Transverse colon (tissue), 4 donors: ENCODE measurements at regions of chr15 and their contacts with region 1.

Region 1: GRCh38 chr15:61834076-61834697 is 226.1 kb downstream of the VPS13C start:
- DNase-seq: peak; percentile 82
- H3K4me3 ChIP-seq: no peak overlapping the region
- H3K27ac ChIP-seq: no peak overlapping the region
- H3K4me1 ChIP-seq: no peaks in the 10 kb centered on the region
- H3K27me3 ChIP-seq: no peaks in the 10 kb centered on the region
- CTCF ChIP-seq: peak; percentile 87 to 98 (median 96)
- EP300 ChIP-seq: no peak
- POLR2A ChIP-seq: no peak

Region 2: GRCh38 chr15:60507596-60508424 is 1326.4 kb before region 1 on chr15:
- in situ Hi-C with region 1: loop called in 1 of 4 experiments (anchors 25 kb)
- intact Hi-C with region 1: loop called (anchors 10 kb)
- DNase-seq: peak; percentile 33
- H3K4me3 ChIP-seq: no peak overlapping the region
- H3K27ac ChIP-seq: peak overlapping the region in 2 of 4 donors; percentile 15 to 24
- H3K4me1 ChIP-seq: peaks cover 0 to 10% (median 3%) of the 10 kb centered on the region in 4 donors
- H3K27me3 ChIP-seq: no peaks in the 10 kb centered on the region
- CTCF ChIP-seq: peak; percentile 86 to 96 (median 89)
- EP300 ChIP-seq: no peak
- POLR2A ChIP-seq: no peak

Region 3: DNA sequence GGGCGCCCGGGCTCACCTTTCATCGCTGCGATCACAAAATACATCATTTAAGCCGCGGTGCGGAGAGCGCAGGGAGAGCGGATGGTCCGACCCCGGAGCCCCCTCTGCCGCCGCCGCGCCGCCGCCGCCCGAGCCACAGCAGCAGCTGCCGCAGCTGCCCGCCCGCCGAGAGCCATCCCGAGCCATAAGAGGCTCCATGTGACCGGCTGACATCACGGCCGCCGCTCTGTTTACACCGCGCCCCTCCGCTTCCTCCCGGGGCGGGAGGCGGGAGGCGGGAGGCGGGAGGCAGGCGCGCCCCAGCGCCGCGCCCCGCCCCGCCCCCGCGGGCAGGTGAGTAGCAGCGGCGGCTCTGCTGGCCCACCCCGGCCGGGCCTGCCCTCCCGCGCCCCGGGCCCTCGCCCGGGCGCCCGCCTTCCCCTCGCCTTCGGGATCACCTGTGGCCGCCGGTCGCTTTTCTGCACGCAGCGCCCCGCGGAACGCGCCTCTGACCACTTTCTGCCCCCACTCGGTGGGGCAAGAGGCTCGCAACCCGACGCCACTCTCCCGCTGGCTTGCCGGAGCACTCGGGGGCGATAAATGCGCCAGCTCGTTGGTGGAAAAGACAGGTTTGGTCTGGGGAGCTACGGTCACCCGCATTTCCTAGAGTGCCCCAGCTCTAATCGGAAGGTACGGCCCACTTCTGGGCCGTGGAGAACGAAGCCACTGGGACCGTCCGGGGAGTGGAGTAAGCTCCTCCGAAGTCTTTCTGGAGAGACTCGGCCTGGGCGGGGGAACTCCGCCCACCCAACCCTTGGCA is 1241.6 kb before region 1 on chr15:
- in situ Hi-C with region 1: loop called in 2 of 4 experiments (anchors 25 kb)
- intact Hi-C with region 1: loop called (anchors 10 kb)
- DNase-seq: peak; percentile 90
- H3K4me3 ChIP-seq: peak overlapping the region; percentile 64 to 86 (median 78)
- H3K27ac ChIP-seq: peak overlapping the region; percentile 88 to 93 (median 90)
- H3K4me1 ChIP-seq: peaks cover 0 to 21% (median 10%) of the 10 kb centered on the region in 4 donors
- H3K27me3 ChIP-seq: peaks cover 29% of the 10 kb centered on the region
- CTCF ChIP-seq: peak in 2 of 5 experiments; percentile 10 to 22
- EP300 ChIP-seq: no peak
- POLR2A ChIP-seq: peak; percentile 69

Region 4: DNA sequence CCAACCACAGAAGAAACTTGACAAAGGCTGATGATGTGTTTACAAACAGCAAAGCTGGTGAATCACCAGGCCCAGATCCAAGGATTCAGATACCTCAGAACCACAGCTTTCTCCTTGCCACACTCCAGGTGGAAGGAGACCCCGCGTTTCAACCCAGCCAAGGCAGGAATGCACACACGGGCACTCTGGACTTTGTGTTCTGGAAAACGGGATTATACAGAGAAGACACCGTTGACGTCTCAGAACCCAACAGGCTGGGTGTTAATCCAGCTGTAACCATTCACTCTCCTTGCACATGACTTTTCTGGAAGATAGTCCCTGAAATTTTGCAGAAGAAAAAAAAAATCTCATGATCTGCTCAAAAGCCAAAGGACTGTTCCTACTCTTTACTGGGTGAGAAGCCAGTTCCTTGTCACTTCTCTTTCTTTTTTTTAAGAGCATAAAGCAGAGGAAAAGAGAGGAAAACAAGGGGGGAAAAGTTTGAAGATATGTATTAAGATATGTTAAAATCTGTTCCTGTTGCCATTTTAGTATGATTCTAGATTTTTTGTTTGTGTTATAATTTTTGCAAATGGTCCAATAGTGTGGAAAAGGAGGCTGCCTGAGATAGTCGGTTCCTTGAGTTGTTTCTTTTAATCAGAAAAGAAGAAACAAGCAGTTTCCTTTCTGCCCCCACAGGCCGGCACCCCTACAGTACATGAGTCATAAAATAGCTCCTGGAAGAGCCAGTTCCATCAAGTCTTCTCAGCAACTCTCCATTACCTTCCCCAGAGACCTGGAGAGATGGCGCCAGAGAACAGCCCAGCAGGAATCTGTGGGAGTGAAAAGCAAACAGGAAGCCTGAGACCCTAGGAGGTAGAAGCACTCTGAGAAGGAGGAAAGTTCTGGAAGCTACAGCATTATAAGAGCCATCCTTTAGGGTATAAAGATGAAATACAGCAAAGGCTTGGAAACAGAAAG is 678.2 kb before region 1 on chr15:
- in situ Hi-C with region 1: loop called in 1 of 4 experiments (anchors 25 kb)
- intact Hi-C with region 1: no loop called
- DNase-seq: peak; percentile 18
- H3K4me3 ChIP-seq: no peak overlapping the region
- H3K27ac ChIP-seq: peak overlapping the region; percentile 12 to 50 (median 30)
- H3K4me1 ChIP-seq: peaks cover 0 to 4% (median 0%) of the 10 kb centered on the region in 4 donors
- H3K27me3 ChIP-seq: no peaks in the 10 kb centered on the region
- CTCF ChIP-seq: no peak
- EP300 ChIP-seq: no peak
- POLR2A ChIP-seq: no peak

Region 5: DNA sequence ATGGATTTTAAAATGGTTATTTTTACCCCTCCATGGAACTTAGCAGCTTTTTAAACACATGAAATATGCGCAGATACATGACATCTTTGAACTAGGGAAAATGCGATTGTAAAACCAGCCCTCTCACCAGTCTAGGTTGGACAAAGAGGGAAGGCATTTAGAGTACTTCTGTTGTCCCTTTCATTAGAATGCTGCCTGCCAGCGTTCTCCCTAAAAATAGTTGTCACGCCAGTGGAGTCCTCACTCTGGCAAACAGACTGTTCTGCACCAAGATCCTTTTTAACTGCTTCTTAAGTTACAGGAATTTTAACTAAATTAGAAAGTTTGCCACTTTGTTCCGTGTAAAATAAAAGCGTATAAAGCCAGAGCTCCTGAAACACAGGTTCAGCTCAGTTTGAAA is 69.2 kb before region 1 on chr15:
- in situ Hi-C with region 1: no loop called
- intact Hi-C with region 1: no loop called
- DNase-seq: no peak
- H3K4me3 ChIP-seq: no peak overlapping the region
- H3K27ac ChIP-seq: no peak overlapping the region
- H3K4me1 ChIP-seq: no peaks in the 10 kb centered on the region
- H3K27me3 ChIP-seq: peaks cover 7% of the 10 kb centered on the region
- CTCF ChIP-seq: no peak
- EP300 ChIP-seq: no peak
- POLR2A ChIP-seq: no peak